ENCODE measurements at regions of chr17 and their contacts with region 1.

Region 1: DNA sequence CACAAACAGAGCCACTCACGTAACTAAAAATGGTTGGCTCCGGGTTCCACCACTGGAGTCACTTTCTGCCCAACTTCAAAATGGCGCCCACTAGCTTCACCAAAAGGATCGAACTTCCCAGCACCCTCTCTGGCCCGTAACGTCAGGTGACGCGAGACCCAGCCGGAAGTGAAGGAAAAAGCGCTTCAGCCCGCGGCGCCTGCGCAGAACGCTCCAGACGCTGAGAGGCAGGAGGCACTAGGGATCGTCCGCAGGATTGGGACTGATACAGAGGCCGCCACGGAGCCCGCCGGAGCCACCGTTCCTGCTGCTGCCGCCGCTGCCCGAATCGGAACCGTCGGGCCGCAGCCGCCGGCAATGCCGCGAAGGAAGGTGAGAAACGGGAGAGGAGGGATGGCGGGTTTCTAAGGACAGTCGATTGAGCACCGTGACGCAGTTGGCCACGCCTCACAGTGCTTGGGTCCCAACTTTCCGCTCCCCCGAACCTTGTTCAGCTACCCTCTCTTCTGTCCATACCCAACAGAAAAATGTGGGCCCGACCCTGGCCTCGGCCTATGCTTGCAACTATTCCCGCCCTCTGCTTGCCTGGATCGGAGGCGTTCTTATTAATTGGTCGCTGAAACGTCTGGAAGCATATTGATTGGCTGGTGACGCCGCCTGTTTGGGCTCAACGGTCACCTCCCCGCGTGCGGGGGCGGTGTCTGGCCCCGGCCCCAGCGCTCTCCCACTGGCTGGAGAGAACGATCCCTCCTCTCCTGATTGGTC is at the start of gene KAT7:
- DNase-seq: peak; percentile 90
- ATAC-seq: peak; percentile 86
- H3K4me3 Mint-ChIP-seq: peak within 1 kb of the TSS; percentile 94
- H3K27ac Mint-ChIP-seq: peak within 1 kb of the TSS; percentile 96
- H3K4me1 Mint-ChIP-seq: peaks cover 42% of the 10 kb centered on the region
- H3K27me3 Mint-ChIP-seq: no peaks in the 10 kb centered on the region
- CTCF ChIP-seq: no peak
- total RNA-seq, gene KAT7: 95.0 and 95.8 TPM in 2 replicates

Region 2: GRCh38 chr17:49414622-49415350 is 373.9 kb before region 1 on chr17 and contains the start of gene PHB1:
- CTCF ChIA-PET with region 1: no interaction called
- POLR2A ChIA-PET with region 1: no interaction called
- intact Hi-C with region 1: loop called (anchors 1 kb)
- DNase-seq: peak; percentile 78
- ATAC-seq: peak; percentile 98
- H3K4me3 Mint-ChIP-seq: peak within 1 kb of the TSS; percentile 100
- H3K27ac Mint-ChIP-seq: peak within 1 kb of the TSS; percentile 89
- H3K4me1 Mint-ChIP-seq: peaks cover 24% of the 10 kb centered on the region
- H3K27me3 Mint-ChIP-seq: no peaks in the 10 kb centered on the region
- CTCF ChIP-seq: no peak
- total RNA-seq, gene PHB1: 184 and 214 TPM in 2 replicates

Region 3: GRCh38 chr17:49739641-49740271 is 48.9 kb before region 1 on chr17:
- CTCF ChIA-PET with region 1: interaction called, 4 read pairs
- POLR2A ChIA-PET with region 1: interaction called, 11 read pairs
- intact Hi-C with region 1: loop called (anchors 1 kb)
- DNase-seq: peak; percentile 75
- ATAC-seq: peak; percentile 91
- H3K4me3 Mint-ChIP-seq: peak overlapping the region; percentile 81
- H3K27ac Mint-ChIP-seq: peak overlapping the region; percentile 99
- H3K4me1 Mint-ChIP-seq: peaks cover 87% of the 10 kb centered on the region
- H3K27me3 Mint-ChIP-seq: no peaks in the 10 kb centered on the region
- CTCF ChIP-seq: no peak

Region 4: GRCh38 chr17:49748791-49749190 is 39.9 kb before region 1 on chr17:
- CTCF ChIA-PET with region 1: no interaction called
- POLR2A ChIA-PET with region 1: interaction called, 23 read pairs
- intact Hi-C with region 1: loop called (anchors 2 kb)
- DNase-seq: no peak
- ATAC-seq: peak; percentile 72
- H3K4me3 Mint-ChIP-seq: peak overlapping the region; percentile 64
- H3K27ac Mint-ChIP-seq: peak overlapping the region; percentile 96
- H3K4me1 Mint-ChIP-seq: peaks cover 83% of the 10 kb centered on the region
- H3K27me3 Mint-ChIP-seq: no peaks in the 10 kb centered on the region
- CTCF ChIP-seq: no peak

Region 5: DNA sequence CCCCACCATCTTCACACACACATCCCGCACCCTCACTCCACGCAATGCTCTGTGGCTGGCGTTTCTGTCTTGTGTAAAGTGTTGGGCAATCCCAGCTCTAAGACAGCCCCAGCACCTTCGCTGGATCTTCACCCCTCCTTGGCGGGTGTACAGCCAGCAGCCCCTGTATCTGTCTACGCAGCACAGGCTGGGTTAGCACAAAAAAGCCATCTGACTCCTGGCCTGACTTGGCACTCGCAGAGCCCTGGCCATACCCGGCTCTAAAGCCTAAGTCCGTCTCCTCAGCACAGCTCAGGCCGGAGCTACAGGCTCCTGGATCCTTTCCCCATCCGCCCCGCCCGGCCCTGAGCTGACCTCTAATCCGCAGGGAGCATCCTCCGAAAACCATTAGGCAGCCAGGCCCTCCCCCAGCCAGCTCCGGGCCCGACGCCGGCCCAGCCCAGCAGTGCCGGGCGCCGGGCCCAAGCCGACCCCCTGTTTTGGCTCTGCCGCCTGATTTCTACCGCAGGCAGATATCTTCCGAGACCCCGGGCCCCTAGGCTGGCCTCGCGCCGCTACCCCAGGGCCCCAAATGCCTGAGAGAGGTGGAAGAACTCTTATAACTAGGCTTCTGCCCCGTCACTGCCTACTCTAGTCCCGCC is 101.6 kb after region 1 on chr17:
- CTCF ChIA-PET with region 1: no interaction called
- POLR2A ChIA-PET with region 1: no interaction called
- intact Hi-C with region 1: no loop called
- DNase-seq: no peak
- ATAC-seq: no peak
- H3K4me3 Mint-ChIP-seq: no peak overlapping the region
- H3K27ac Mint-ChIP-seq: no peak overlapping the region
- H3K4me1 Mint-ChIP-seq: no peaks in the 10 kb centered on the region
- H3K27me3 Mint-ChIP-seq: peaks cover 52% of the 10 kb centered on the region
- CTCF ChIP-seq: no peak

Measured in activated B cell treated with CpG ODN at 0.5 μM for 24 hours (primary cell).